H1 (cell line): ENCODE measurements at regions of chr9 and their contacts with region 1.

Region 1: GRCh38 chr9:2857564-2858198 is 13.8 kb upstream of the PUM3 start:
- DNase-seq: peak in 1 of 2 experiments; percentile 78
- H3K4me3 ChIP-seq: no peak overlapping the region
- H3K27ac ChIP-seq: no peak overlapping the region
- H3K4me1 ChIP-seq: no peaks in the 10 kb centered on the region
- H3K27me3 ChIP-seq: no peaks in the 10 kb centered on the region
- CTCF ChIP-seq: peak; percentile 18 to 82 (median 76)
- EP300 ChIP-seq: no peak
- POLR2A ChIP-seq: no peak
- RAD21 ChIP-seq: peak; percentile 89 to 91

Region 2: GRCh38 chr9:2755285-2755684 is 102.4 kb before region 1 on chr9:
- CTCF ChIA-PET with region 1: no interaction called
- POLR2A ChIA-PET with region 1: no interaction called
- DNase-seq: no peak
- H3K4me3 ChIP-seq: no peak overlapping the region
- H3K27ac ChIP-seq: no peak overlapping the region
- H3K4me1 ChIP-seq: peaks cover 0 to 7% (median under 1%) of the 10 kb centered on the region in 4 experiments; a peak in 1 of 7 replicates
- H3K27me3 ChIP-seq: no peaks in the 10 kb centered on the region
- CTCF ChIP-seq: no peak
- EP300 ChIP-seq: no peak
- POLR2A ChIP-seq: no peak
- RAD21 ChIP-seq: no peak

Region 3: GRCh38 chr9:2872257-2872935 is 14.7 kb after region 1 on chr9:
- CTCF ChIA-PET with region 1: interaction called, 50 read pairs
- POLR2A ChIA-PET with region 1: no interaction called
- DNase-seq: no peak
- H3K4me3 ChIP-seq: no peak overlapping the region
- H3K27ac ChIP-seq: no peak overlapping the region
- H3K4me1 ChIP-seq: no peaks in the 10 kb centered on the region; a peak in 1 of 7 replicates
- H3K27me3 ChIP-seq: no peaks in the 10 kb centered on the region
- CTCF ChIP-seq: peak in 2 of 3 experiments; percentile 41 to 47; a peak in 2 of 4 replicates
- EP300 ChIP-seq: no peak
- POLR2A ChIP-seq: no peak
- RAD21 ChIP-seq: peak; percentile 73 to 78

Region 4: GRCh38 chr9:2884308-2884707 is 26.6 kb after region 1 on chr9:
- CTCF ChIA-PET with region 1: interaction called, 10 read pairs
- POLR2A ChIA-PET with region 1: no interaction called
- DNase-seq: no peak
- H3K4me3 ChIP-seq: no peak overlapping the region
- H3K27ac ChIP-seq: no peak overlapping the region
- H3K4me1 ChIP-seq: no peaks in the 10 kb centered on the region
- H3K27me3 ChIP-seq: no peaks in the 10 kb centered on the region
- CTCF ChIP-seq: no peak
- EP300 ChIP-seq: no peak
- POLR2A ChIP-seq: no peak
- RAD21 ChIP-seq: no peak